Calu3 (cell line): ENCODE measurements at regions of chr3 and their contacts with region 1.

Region 1: DNA sequence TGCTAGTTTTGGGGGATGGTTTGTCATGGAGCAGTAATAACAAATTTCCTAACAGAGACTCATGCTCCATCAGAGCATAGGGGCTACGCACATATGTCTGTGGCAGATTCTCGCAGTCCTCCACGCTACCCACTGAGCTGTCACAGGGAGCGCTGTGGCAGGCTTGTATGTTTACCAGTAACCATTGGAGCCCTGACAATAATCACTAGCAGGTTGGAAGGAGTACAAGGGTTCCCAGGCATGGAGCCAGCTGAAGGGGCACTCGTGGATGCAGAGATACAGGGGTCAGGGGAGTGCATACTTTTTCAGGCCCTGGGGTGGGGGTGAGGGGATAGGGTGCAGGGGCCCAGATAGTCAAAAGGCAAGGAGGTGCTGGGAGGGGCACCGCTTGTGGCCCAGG is 7.9 kb upstream of the GP9 start:
- DNase-seq: no peak
- H3K4me3 Mint-ChIP-seq: no peak overlapping the region
- H3K27ac Mint-ChIP-seq: no peak overlapping the region
- H3K4me1 Mint-ChIP-seq: peaks cover 38% of the 10 kb centered on the region
- H3K27me3 Mint-ChIP-seq: peaks cover 28% of the 10 kb centered on the region
- CTCF ChIP-seq: no peak

Region 2: GRCh38 chr3:129026728-129027543 is 25.7 kb before region 1 on chr3:
- CTCF ChIA-PET with region 1: interaction called, 30 read pairs
- intact Hi-C with region 1: no loop called
- DNase-seq: peak; percentile 96
- H3K4me3 Mint-ChIP-seq: peak overlapping the region; percentile 44
- H3K27ac Mint-ChIP-seq: peak overlapping the region; percentile 17
- H3K4me1 Mint-ChIP-seq: peaks cover 8% of the 10 kb centered on the region
- H3K27me3 Mint-ChIP-seq: peaks cover 51% of the 10 kb centered on the region
- CTCF ChIP-seq: peak; percentile 86

Region 3: DNA sequence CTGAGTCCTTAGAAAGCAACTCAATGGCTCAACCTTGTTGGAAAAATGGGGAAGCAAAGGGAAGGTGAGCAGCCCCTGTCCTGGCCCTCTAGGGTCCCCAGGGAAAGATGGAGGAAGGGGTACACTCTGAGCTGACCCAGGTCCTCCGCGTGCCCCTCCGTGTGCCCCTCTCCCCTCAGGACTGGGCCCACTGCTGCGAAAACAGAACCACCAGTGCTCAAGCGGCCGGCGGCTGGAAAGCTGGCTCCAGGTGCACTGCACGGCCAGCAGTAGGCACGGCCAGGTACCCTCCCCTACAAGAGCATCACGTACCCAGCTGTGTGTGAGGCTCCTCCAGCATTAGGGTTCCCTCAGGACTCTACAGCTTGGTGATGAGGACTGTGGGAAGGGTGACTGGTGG is 42.6 kb after region 1 on chr3:
- CTCF ChIA-PET with region 1: interaction called, 3 read pairs
- intact Hi-C with region 1: loop called (anchors 5 kb)
- DNase-seq: no peak
- H3K4me3 Mint-ChIP-seq: no peak overlapping the region
- H3K27ac Mint-ChIP-seq: no peak overlapping the region
- H3K4me1 Mint-ChIP-seq: no peaks in the 10 kb centered on the region
- H3K27me3 Mint-ChIP-seq: no peaks in the 10 kb centered on the region
- CTCF ChIP-seq: no peak

Region 4: DNA sequence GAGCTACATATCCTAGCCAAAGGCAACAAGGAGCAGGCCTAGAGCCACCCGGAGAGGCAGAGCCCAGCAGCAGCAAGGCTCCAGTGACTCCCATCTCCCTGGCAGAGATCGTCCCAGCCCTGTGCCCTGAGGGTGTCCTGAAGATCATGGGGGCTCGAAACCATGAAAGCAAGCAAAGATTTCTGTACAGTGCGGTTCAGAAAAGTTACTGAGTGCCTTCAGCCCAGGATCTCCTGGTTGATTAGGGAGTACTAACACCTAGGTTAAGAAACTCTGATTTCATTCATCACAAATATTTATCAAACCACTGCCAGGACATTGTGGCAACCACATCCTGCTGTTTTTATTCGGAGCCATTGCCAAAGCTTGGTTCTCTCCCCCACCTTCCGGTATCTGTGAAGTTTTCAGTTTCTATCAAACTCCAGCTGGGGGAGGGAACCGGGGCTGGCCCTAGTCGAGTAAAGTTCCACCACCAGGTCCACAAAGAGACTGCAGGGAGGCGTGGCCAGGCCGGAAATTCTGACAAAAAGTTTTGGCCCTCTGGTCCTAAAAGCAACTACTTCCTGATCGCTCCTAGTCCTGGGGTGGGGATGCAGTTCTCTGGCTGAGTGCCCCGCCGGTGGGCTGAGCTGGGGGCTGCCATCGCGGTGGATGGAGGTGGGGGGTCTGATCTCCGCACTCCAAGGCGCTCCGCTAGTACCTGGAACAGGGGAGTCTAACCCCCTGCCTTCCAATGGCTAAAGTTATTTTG is 67.8 kb after region 1 on chr3:
- CTCF ChIA-PET with region 1: interaction called, 30 read pairs
- intact Hi-C with region 1: loop called (anchors 5 kb)
- DNase-seq: peak; percentile 94
- H3K4me3 Mint-ChIP-seq: peak overlapping the region; percentile 69
- H3K27ac Mint-ChIP-seq: peak overlapping the region; percentile 27
- H3K4me1 Mint-ChIP-seq: peaks cover 55% of the 10 kb centered on the region
- H3K27me3 Mint-ChIP-seq: no peaks in the 10 kb centered on the region
- CTCF ChIP-seq: no peak

Region 5: DNA sequence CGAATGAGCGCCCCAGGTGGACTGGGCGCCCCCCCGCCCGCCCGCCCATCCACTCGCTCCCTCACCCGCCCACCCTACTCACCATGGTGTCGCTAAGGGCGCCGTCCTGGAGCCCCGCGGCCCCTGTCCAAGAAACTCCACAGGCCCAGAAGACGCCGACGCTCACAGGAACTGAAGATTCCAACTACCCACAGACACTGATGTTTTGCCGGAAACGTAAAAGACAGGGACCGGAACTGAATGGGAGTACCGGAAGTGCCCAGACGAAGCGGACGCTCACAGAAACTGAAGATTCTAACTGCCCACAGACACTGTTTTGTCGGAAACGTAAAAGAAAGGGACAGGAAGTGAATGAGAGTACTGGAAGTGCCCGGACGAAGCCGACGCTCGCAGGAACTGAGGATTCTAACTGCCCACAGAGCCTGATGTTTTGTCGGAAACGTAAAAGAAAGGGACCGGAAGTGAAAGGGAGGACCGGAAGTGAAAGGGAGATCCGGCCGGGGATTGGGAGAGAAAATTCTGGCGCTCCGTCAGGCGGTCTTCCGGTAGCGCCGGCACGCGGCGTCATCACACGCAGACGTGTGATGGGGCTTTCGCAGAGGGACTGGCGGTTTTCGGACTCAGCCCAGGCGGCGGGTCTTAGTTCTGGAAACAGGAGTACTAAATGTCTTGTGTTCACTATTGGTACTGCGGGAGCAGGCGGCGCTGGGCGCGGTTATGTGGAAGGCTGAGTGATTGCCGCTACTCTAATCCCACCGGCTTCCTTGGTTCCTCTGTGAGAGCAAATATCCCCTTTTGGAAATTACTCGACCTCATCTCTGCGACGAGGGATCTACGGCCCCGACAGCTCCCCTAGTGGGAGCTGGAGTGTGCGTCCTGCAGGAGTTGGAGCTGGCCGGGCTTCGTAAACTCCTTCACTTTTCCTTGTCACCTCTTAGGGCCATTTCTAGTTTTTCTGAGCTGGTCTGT is 108.5 kb after region 1 on chr3 and contains the start of gene ISY1:
- CTCF ChIA-PET with region 1: interaction called, 16 read pairs
- intact Hi-C with region 1: loop called (anchors 2 kb)
- DNase-seq: peak; percentile 96
- H3K4me3 Mint-ChIP-seq: peak within 1 kb of the TSS; percentile 90
- H3K27ac Mint-ChIP-seq: peak within 1 kb of the TSS; percentile 99
- H3K4me1 Mint-ChIP-seq: peaks cover 35% of the 10 kb centered on the region
- H3K27me3 Mint-ChIP-seq: no peaks in the 10 kb centered on the region
- CTCF ChIP-seq: peak; percentile 86
- total RNA-seq, gene ISY1: 63.8 and 77.0 TPM in 2 replicates

Region 6: DNA sequence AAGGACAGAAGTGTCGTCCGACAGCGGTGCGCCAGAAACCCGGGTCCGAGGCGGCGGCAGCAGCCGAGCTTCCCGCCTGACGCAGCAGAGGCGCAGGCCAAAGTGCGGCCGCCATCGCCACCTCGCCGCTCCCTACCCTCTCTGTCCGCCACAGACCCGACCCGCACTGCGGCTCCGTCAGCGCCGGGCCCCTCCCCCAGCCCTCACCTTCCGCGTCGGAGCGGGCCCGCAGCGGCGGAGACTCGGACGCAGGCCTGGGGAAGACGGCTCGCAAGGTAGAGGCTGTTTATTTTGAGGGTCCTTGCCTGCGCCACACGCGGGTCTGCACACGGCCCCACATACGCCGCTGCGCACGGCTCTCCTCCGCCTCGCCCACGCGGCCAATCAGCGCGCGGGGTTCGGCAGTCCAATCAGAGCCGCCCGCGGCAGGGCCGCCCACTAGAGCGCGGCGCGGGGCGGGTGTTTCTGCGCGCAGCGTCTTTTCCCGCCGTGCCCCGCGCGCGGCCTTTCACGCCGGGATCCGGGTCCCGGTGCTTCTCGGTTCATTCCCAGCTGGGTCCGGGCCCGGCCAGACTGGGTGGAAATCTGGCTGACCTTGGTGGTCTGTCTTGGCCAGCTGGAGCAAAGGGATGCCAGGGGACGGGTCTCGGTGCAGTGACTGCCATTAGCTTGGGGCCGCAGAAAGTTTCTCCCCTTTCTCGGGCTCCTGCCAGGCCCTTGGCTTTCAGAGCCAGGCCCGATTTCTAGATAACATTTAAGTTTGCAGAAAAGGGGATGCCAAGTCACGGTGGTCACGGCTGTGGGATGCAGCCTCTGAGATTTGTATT is 131.1 kb after region 1 on chr3 and contains the start of gene CNBP:
- CTCF ChIA-PET with region 1: no interaction called
- intact Hi-C with region 1: loop called (anchors 5 kb)
- DNase-seq: peak; percentile 99
- H3K4me3 Mint-ChIP-seq: peak within 1 kb of the TSS; percentile 100
- H3K27ac Mint-ChIP-seq: peak within 1 kb of the TSS; percentile 99
- H3K4me1 Mint-ChIP-seq: peaks cover 27% of the 10 kb centered on the region
- H3K27me3 Mint-ChIP-seq: no peaks in the 10 kb centered on the region
- CTCF ChIP-seq: no peak
- total RNA-seq, gene CNBP: 331 and 355 TPM in 2 replicates

Region 7: GRCh38 chr3:129289201-129289921 is 236.7 kb after region 1 on chr3:
- CTCF ChIA-PET with region 1: no interaction called
- intact Hi-C with region 1: no loop called
- DNase-seq: no peak
- H3K4me3 Mint-ChIP-seq: no peak overlapping the region
- H3K27ac Mint-ChIP-seq: no peak overlapping the region
- H3K4me1 Mint-ChIP-seq: no peaks in the 10 kb centered on the region
- H3K27me3 Mint-ChIP-seq: no peaks in the 10 kb centered on the region
- CTCF ChIP-seq: no peak